ENCODE measurements at regions of chr14 and their contacts with region 1.

Region 1: DNA sequence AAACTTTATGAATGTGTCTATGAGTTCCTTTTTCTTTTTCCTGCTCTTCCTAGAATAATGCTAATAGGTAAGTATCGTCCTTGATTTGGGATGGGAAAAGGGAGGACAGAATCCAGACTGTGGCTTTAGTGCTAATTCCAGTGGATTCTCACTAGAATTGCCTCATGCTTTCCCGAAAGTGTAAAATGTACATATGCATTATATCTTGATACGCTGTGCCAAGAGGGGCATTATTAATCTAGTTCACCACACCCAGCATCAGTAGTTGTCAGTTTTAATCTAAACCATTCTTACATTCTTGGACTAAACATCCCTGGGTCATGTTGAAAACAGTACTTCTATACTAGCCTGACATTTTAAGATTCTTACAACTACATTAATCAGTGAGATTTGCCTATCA is 49.3 kb downstream of the GCH1 start:
- DNase-seq: no peak
- ATAC-seq: no peak
- H3K4me3 ChIP-seq: no peak overlapping the region
- H3K27ac ChIP-seq: no peak overlapping the region
- H3K4me1 ChIP-seq: 0 out of 2 replicates have a peak, but pooled peaks cover 4% of the 10 kb centered on the region
- H3K27me3 ChIP-seq: no peaks in the 10 kb centered on the region
- CTCF ChIP-seq: no peak
- EP300 ChIP-seq: no peak
- POLR2A ChIP-seq: no peak
- RAD21 ChIP-seq: no peak

Region 2: GRCh38 chr14:54839701-54840119 is 13.6 kb before region 1 on chr14:
- CTCF ChIA-PET with region 1: no interaction called
- POLR2A ChIA-PET with region 1: interaction called, 3 read pairs
- in situ Hi-C with region 1: no loop called
- intact Hi-C with region 1: loop called (anchors 1 kb)
- DNase-seq: peak; percentile 89
- ATAC-seq: peak; percentile 74
- H3K4me3 ChIP-seq: peak overlapping the region in 1 of 3 experiments; percentile 1; a peak in 1 of 6 replicates
- H3K27ac ChIP-seq: peak overlapping the region; percentile 75
- H3K4me1 ChIP-seq: peaks cover 78% of the 10 kb centered on the region
- H3K27me3 ChIP-seq: no peaks in the 10 kb centered on the region
- CTCF ChIP-seq: no peak
- EP300 ChIP-seq: peak in 1 of 2 experiments; percentile 89; a peak in 2 of 4 replicates
- POLR2A ChIP-seq: no peak
- RAD21 ChIP-seq: no peak